ENCODE measurements at regions of chr6 and their contacts with region 1.

Region 1: DNA sequence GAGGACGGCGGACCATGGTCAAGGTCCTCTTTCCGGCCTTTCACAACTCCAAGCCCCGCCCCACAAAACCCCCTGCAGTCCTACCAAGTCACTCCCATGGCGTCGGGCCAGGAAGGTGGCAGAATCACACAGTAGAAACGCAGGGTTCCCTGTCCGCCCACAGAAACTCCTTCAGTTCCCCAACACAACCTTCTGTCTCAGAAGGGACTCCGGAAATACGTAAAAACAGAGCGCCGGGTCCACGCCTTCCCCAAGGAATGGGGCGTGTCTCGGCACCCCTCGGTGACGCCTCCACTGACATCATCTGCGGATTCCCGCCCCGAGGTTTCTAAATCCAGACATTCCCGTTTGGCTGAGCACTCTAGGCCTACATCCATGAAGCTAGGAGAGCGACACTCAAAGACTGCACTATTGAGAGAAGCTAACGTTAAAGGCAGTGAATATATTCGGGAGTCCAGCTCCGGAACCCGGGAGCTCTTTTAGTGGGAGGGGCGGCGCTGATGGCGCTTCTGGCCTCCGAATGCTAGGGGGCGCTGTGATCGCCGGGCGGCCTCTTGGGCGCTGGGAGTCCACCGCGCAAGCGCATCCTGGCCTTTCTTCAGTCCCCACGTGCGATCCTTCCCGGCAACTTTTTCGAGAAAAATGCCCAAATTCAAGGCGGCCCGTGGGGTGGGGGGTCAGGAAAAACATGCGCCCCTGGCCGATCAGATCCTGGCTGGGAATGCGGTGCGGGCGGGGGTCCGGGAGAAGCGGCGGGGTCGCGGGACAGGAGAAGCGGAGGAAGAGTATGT is at the starts of genes BYSL and MED20:
- DNase-seq: peak; percentile 95
- ATAC-seq: peak; percentile 84
- H3K4me3 ChIP-seq: peak within 1 kb of the TSS; percentile 73 to 82
- H3K27ac ChIP-seq: peak within 1 kb of the TSS; percentile 80
- H3K4me1 ChIP-seq: peaks cover 22 to 42% of the 10 kb centered on the region in 2 experiments
- H3K27me3 ChIP-seq: no peaks in the 10 kb centered on the region
- CTCF ChIP-seq: peak; percentile 71 to 94 (median 89)
- POLR2A ChIP-seq: peak; percentile 76
- RAD21 ChIP-seq: no peak; the same call in 1 of the 2 replicates
- total RNA-seq, gene BYSL: 55.7 TPM
- total RNA-seq, gene MED20: 26.4 TPM

Region 2: DNA sequence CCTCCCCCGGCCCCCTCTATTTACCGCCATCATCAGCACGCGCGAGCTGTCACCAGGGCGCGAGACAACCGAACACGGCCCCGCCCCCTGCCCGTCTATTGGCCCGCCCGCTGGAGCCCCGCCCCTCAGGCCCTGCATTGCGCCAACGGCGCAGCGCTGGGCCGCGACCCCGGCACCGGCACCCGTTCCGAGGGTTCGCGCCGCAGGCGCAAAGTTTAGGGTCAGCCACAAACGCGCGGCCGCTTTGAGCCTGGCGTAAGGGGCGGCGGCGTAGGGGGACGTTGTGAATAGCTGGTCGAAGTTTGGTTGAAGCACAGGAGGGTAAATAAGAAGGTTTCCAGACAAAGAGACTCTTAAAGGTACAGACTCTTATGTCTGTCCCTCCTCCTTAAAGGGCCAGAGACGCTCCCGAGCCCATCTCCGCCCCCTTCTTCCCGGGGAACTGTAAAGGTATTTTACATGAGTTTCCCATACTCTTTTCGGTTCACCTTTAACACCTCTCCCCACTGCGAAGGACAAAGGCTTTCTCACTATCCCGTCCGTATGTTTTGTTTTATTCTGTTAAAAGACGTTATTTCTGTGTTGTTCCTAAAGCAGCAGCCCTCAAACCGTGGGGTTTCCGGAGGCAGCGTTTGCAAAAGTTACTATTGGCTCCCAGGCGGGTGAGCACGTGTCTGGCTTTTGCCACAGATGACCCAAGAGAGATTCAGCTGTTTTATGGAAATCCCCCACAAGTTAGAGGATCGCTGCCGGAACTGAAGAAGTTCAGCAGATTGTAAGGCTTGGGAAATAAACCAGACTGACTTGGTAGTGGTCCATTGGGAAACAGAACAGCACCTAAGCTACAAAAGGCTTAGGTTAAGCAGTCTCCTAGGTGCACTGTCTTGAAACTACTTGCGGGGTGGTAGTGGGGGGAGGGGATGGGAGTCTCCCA is 25.5 kb before region 1 on chr6 and contains the start of gene USP49:
- CTCF ChIA-PET with region 1: interaction called, 13 read pairs
- POLR2A ChIA-PET with region 1: interaction called, 5 read pairs
- RAD21 ChIA-PET with region 1: no interaction called
- intact Hi-C with region 1: loop called (anchors 1 kb)
- DNase-seq: peak; percentile 45
- ATAC-seq: peak; percentile 97
- H3K4me3 ChIP-seq: peak within 1 kb of the TSS; percentile 66 to 72
- H3K27ac ChIP-seq: peak within 1 kb of the TSS; percentile 31; the same call in 1 of the 2 replicates
- H3K4me1 ChIP-seq: peaks cover 9 to 15% of the 10 kb centered on the region in 2 experiments; a peak in 3 of 4 replicates
- H3K27me3 ChIP-seq: no peaks in the 10 kb centered on the region; the same call in 1 of the 2 replicates
- CTCF ChIP-seq: no peak
- POLR2A ChIP-seq: no peak
- RAD21 ChIP-seq: no peak
- total RNA-seq, gene USP49: 6.9 TPM

Region 3: DNA sequence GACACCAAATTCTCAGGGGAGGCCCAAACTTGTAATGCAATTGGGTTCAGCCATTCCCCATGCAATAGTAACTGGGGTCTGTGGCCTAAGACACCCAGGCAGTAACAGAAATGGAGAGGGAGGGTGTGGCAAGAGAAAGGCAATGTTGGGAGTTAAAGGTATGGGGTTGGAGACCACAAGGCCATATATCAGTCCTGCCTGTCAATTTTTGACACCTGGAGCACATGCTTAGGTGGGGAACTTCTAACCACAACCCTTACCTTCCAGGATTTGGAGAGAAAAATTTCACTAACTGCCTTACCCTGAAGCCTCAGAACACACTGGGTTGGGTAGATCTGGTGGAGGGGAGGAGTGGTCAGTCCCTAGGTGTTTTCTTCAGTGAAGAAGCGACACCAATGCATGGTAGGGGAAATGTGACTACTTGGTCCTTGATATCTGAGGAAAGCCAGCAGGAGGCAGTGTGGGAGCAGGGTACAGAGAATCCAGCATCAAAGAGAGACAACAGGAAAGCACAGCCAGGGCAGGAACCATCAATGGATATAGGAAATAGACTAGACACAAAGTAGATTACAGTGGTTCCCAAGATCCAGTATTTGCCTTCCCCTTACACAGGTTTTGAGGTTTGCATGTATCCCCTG is 19.1 kb before region 1 on chr6:
- CTCF ChIA-PET with region 1: interaction called, 6 read pairs
- POLR2A ChIA-PET with region 1: no interaction called
- RAD21 ChIA-PET with region 1: no interaction called
- intact Hi-C with region 1: loop called (anchors 1 kb)
- DNase-seq: no peak
- ATAC-seq: peak; percentile 49; the same call in 1 of the 2 replicates
- H3K4me3 ChIP-seq: no peak overlapping the region
- H3K27ac ChIP-seq: no peak overlapping the region
- H3K4me1 ChIP-seq: peaks cover 0 to 6% of the 10 kb centered on the region in 2 experiments; a peak in 1 of 4 replicates
- H3K27me3 ChIP-seq: no peaks in the 10 kb centered on the region
- CTCF ChIP-seq: peak in 2 of 3 experiments; percentile 23 to 43; a peak in 3 of 6 replicates
- POLR2A ChIP-seq: no peak
- RAD21 ChIP-seq: no peak; the same call in 1 of the 2 replicates

Region 4: GRCh38 chr6:41936073-41936837 is 15.1 kb after region 1 on chr6:
- CTCF ChIA-PET with region 1: interaction called, 25 read pairs
- POLR2A ChIA-PET with region 1: interaction called, 6 read pairs
- RAD21 ChIA-PET with region 1: interaction called in 1 of 2 experiments, 3 read pairs
- intact Hi-C with region 1: no loop called
- DNase-seq: peak; percentile 53
- ATAC-seq: peak; percentile 74
- H3K4me3 ChIP-seq: no peak overlapping the region
- H3K27ac ChIP-seq: peak overlapping the region; percentile 24; the same call in 1 of the 2 replicates
- H3K4me1 ChIP-seq: peaks cover 6 to 26% of the 10 kb centered on the region in 2 experiments; a peak in 3 of 4 replicates
- H3K27me3 ChIP-seq: no peaks in the 10 kb centered on the region
- CTCF ChIP-seq: peak; percentile 64 to 92 (median 84); a peak in 5 of 6 replicates
- POLR2A ChIP-seq: no peak
- RAD21 ChIP-seq: peak; percentile 72

Region 5: GRCh38 chr6:41941280-41942066 is 20.4 kb after region 1 on chr6 and contains the start of gene CCND3:
- CTCF ChIA-PET with region 1: interaction called, 25 read pairs
- POLR2A ChIA-PET with region 1: interaction called, 6 read pairs
- RAD21 ChIA-PET with region 1: interaction called in 1 of 2 experiments, 3 read pairs
- intact Hi-C with region 1: no loop called
- DNase-seq: peak; percentile 68
- ATAC-seq: peak; percentile 93
- H3K4me3 ChIP-seq: peak within 1 kb of the TSS; percentile 81 to 88
- H3K27ac ChIP-seq: peak within 1 kb of the TSS; percentile 50
- H3K4me1 ChIP-seq: peaks cover 12 to 31% of the 10 kb centered on the region in 2 experiments; a peak in 3 of 4 replicates
- H3K27me3 ChIP-seq: no peaks in the 10 kb centered on the region
- CTCF ChIP-seq: no peak
- POLR2A ChIP-seq: no peak
- RAD21 ChIP-seq: no peak
- total RNA-seq, gene CCND3: 26.6 TPM

Region 6: GRCh38 chr6:42043787-42044475 is 122.8 kb after region 1 on chr6:
- CTCF ChIA-PET with region 1: interaction called, 11 read pairs
- POLR2A ChIA-PET with region 1: no interaction called
- RAD21 ChIA-PET with region 1: no interaction called
- intact Hi-C with region 1: loop called (anchors 5 kb)
- DNase-seq: peak; percentile 62
- ATAC-seq: peak; percentile 87
- H3K4me3 ChIP-seq: no peak overlapping the region
- H3K27ac ChIP-seq: no peak overlapping the region
- H3K4me1 ChIP-seq: peaks cover 29 to 41% of the 10 kb centered on the region in 2 experiments
- H3K27me3 ChIP-seq: no peaks in the 10 kb centered on the region
- CTCF ChIP-seq: peak in 2 of 3 experiments; percentile 96; a peak in 4 of 6 replicates
- POLR2A ChIP-seq: no peak
- RAD21 ChIP-seq: no peak

Region 7: GRCh38 chr6:42224222-42224989 is 303.3 kb after region 1 on chr6:
- CTCF ChIA-PET with region 1: no interaction called
- POLR2A ChIA-PET with region 1: no interaction called
- RAD21 ChIA-PET with region 1: no interaction called
- intact Hi-C with region 1: loop called (anchors 5 kb)
- DNase-seq: peak; percentile 97
- ATAC-seq: peak; percentile 62
- H3K4me3 ChIP-seq: peak overlapping the region; percentile 23 to 42
- H3K27ac ChIP-seq: peak overlapping the region; percentile 84
- H3K4me1 ChIP-seq: peaks cover 48 to 85% of the 10 kb centered on the region in 2 experiments
- H3K27me3 ChIP-seq: no peaks in the 10 kb centered on the region
- CTCF ChIP-seq: no peak
- POLR2A ChIP-seq: no peak
- RAD21 ChIP-seq: peak; percentile 23